ENCODE measurements at regions of chr13 and their contacts with region 1.

Region 1: DNA sequence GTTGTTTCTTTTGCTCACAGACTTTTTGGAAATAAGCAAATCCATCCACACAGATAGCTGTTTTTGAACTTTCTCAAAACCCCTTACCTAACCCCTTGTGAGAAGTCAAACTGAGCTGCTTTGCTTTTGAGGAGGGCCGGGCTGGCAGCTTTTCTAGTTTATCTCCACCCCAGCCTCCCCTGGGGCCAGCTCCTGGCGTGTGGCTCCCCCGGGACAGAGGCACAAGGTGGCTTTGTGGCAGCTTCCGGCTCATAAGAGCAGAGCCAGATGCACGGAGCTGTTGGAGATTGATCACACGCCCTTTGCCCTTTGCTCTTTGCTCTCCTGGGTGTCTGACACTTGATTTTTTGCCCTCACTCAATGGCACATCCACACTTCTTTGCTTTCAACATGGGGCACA is 24.9 kb upstream of the RNF113B start:
- DNase-seq: no peak
- ATAC-seq: no peak
- H3K4me3 ChIP-seq: no peak overlapping the region
- H3K27ac ChIP-seq: peak overlapping the region in 1 of 12 donors; percentile 20
- H3K4me1 ChIP-seq: peaks cover 0 to 16% (median 2%) of the 10 kb centered on the region in 12 donors
- H3K27me3 ChIP-seq: no peaks in the 10 kb centered on the region
- CTCF ChIP-seq: no peak
- POLR2A ChIP-seq: no peak

Region 2: DNA sequence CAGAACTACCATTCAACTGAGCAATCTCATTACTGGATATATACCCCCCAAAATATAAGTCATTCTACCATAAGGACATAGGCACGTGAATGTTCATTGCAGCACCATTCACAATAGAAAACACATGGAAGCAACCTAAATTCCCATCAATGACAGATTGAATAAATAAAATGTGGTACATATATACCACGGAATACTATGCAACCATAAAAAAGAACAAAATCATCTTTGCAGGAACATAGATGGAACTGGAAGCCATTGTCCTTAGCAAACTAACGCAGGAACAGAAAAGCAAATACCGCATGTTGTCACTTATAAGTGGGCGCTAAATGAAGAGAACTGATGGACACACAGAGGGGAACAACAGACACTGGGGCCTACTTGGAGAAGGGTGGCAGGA is 39.0 kb before region 1 on chr13:
- intact Hi-C with region 1: loop called in 1 of 10 experiments (anchors 5 kb)
- DNase-seq: no peak
- ATAC-seq: no peak
- H3K4me3 ChIP-seq: no peak overlapping the region
- H3K27ac ChIP-seq: no peak overlapping the region
- H3K4me1 ChIP-seq: peaks cover 0 to 15% (median 0%) of the 10 kb centered on the region in 12 donors
- H3K27me3 ChIP-seq: no peaks in the 10 kb centered on the region
- CTCF ChIP-seq: no peak
- POLR2A ChIP-seq: no peak

Measured in heart left ventricle (tissue), 16 donors.